ENCODE measurements at regions of chr4 and their contacts with region 1.

Region 1: DNA sequence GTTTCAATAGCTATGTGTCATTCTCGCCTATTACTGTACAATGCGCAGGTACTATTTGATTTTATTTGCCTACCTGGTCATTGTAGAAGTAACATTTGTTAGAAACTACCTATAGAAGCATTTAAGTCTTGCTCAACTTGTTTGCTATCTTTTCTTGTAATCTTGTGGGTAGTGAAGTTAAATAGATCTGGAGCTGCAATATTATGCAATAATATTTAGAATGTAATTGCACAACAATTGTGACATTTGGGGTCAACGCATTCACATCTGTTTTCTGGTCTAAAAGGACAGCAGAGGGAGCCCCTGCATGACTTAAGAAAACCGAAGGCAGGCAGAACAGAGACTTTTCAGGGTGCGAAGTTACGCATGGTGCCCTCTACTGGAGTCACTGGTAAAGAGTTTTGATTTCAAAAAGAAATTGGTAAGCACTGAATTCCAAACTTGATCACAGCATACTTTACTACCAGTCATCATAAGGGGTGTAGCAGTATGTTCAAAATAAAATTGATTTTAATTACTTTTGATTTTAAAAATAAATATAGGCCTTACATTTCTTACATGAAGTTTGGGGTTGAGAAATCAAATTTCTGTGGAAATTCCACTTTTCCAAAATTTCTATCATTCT is 503.2 kb upstream of the FAM241A start:
- DNase-seq: peak; percentile 87
- ATAC-seq: peak; percentile 97
- H3K4me3 ChIP-seq: no peak overlapping the region
- H3K27ac ChIP-seq: no peak overlapping the region
- H3K4me1 ChIP-seq: no peaks in the 10 kb centered on the region
- H3K27me3 ChIP-seq: no peaks in the 10 kb centered on the region
- CTCF ChIP-seq: peak; percentile 83
- EP300 ChIP-seq: 0 out of 4 replicates have a peak, but pooled peaks of 1 of the 2 experiments have one; percentile 22
- POLR2A ChIP-seq: no peak
- RAD21 ChIP-seq: peak; percentile 71

Region 2: DNA sequence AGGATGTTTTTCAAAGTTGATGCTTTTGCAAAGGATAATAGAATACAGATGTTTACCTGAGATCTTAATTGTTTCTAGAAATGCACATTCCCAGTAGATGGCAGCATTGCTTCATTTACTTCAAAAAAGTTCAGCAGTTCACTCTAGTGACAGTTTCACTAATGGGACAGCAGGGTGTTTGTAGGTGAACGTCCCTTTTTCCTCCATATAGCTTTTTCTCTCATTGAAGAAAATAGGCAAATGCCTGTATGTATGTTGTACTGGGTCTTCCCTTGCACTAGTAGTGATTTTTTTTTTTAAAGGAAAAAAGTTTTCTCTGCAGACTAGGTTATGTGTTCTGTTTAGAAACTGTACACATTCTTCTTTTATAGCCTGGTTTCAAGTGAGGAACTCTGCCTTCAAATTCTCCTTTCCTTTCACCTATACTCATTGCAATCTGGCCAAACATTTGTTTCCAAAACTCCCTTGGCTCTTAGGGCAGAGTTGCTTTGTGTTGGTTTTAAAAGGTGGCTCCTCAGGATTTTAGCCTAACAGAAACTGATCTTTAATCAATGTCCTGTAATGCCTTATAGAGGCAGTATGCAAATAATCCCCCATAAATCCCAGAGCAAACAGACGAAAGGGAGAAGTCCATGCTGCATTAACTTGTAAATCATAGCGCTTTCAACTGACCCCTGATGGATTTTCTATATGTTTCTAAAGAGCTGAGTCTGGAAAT is 1643.0 kb before region 1 on chr4:
- CTCF ChIA-PET with region 1: no interaction called
- POLR2A ChIA-PET with region 1: no interaction called
- in situ Hi-C with region 1: loop called (anchors 25 kb)
- intact Hi-C with region 1: loop called (anchors 5 kb)
- DNase-seq: peak; percentile 73
- ATAC-seq: peak; percentile 95
- H3K4me3 ChIP-seq: no peak overlapping the region
- H3K27ac ChIP-seq: no peak overlapping the region
- H3K4me1 ChIP-seq: peaks cover 8% of the 10 kb centered on the region; the same call in 1 of the 2 replicates
- H3K27me3 ChIP-seq: no peaks in the 10 kb centered on the region
- CTCF ChIP-seq: peak; percentile 79
- EP300 ChIP-seq: no peak
- POLR2A ChIP-seq: no peak
- RAD21 ChIP-seq: peak; percentile 72

Region 3: DNA sequence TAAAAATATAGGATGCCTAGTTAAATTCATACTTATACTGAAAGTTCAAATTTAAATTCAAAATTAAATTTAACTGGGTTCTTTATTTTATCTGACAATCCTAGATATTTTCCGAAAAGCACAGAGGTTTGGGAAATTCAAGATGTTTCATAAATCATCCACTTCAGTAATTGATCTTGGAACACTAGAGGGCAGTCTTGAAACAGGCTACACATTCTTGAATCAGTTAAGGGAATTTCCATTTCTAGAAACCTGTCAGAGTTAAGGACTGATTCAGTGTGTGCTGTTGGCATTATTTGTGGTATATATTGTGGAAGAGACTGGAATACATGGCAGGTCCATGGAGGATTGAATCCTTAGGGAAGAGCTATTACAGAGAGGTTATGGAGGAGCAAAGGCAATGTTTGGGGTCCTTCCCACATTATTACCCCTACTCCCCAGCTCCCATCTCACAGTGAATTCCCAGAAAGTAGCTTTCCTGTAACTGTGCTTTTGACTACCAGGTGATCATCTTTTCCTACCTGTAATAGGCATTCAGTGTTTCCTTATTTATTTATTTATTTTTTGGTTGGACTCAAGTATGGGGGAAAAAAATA is 1636.5 kb before region 1 on chr4:
- CTCF ChIA-PET with region 1: no interaction called
- POLR2A ChIA-PET with region 1: no interaction called
- in situ Hi-C with region 1: loop called (anchors 25 kb)
- intact Hi-C with region 1: no loop called
- DNase-seq: peak; percentile 60
- ATAC-seq: peak; percentile 50
- H3K4me3 ChIP-seq: no peak overlapping the region
- H3K27ac ChIP-seq: no peak overlapping the region
- H3K4me1 ChIP-seq: peaks cover 29% of the 10 kb centered on the region
- H3K27me3 ChIP-seq: no peaks in the 10 kb centered on the region
- CTCF ChIP-seq: peak; percentile 77
- EP300 ChIP-seq: no peak
- POLR2A ChIP-seq: no peak
- RAD21 ChIP-seq: peak; percentile 45; the same call in 1 of the 2 replicates

Region 4: DNA sequence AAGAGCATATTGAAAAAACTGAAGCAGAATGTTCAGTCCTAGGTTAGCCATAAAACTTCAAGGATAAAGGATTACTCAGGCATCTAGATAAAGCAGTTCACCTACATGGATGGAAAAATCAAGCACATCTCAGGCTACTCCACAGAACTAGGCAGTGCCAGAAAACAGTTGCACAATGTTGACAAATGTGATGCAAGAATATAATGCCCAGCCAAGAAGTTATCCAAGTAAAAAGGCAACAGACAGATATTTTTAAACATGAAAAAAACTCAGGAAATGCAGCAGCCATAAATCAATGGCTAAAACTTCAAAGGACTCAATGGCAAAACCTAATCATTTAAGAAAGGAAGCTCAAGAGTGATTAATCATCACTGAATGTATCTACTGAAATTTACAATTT is 47.1 kb after region 1 on chr4:
- CTCF ChIA-PET with region 1: no interaction called
- POLR2A ChIA-PET with region 1: no interaction called
- in situ Hi-C with region 1: no loop called
- intact Hi-C with region 1: no loop called
- DNase-seq: no peak
- ATAC-seq: peak; percentile 45; the same call in 1 of the 3 replicates
- H3K4me3 ChIP-seq: no peak overlapping the region
- H3K27ac ChIP-seq: no peak overlapping the region
- H3K4me1 ChIP-seq: no peaks in the 10 kb centered on the region
- H3K27me3 ChIP-seq: no peaks in the 10 kb centered on the region
- CTCF ChIP-seq: no peak
- EP300 ChIP-seq: no peak
- POLR2A ChIP-seq: no peak
- RAD21 ChIP-seq: no peak

Region 5: GRCh38 chr4:111798840-111799239 is 156.8 kb after region 1 on chr4:
- CTCF ChIA-PET with region 1: no interaction called
- POLR2A ChIA-PET with region 1: no interaction called
- in situ Hi-C with region 1: no loop called
- intact Hi-C with region 1: loop called (anchors 2 kb)
- DNase-seq: no peak
- ATAC-seq: peak; percentile 80
- H3K4me3 ChIP-seq: no peak overlapping the region
- H3K27ac ChIP-seq: no peak overlapping the region
- H3K4me1 ChIP-seq: no peaks in the 10 kb centered on the region
- H3K27me3 ChIP-seq: no peaks in the 10 kb centered on the region
- CTCF ChIP-seq: no peak
- EP300 ChIP-seq: no peak
- POLR2A ChIP-seq: no peak
- RAD21 ChIP-seq: no peak

Region 6: DNA sequence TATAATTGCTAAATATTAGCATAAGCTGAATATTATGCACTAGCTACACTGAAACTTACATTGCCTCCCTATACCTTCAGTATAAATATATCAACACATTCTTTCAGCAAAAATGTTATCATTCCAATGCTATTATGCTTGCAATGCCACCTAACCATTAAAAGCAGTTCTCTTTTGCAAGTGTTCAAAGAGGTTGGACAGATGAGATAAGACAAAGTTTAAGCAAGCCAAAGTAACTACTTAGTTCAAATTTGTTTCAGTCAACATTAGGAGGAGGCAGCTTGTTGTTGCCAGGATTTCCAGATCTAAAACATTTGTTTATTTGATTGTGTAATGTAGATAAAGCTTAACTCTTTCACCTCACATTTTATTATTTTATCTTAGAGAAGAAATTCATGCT is 179.3 kb after region 1 on chr4:
- CTCF ChIA-PET with region 1: no interaction called
- POLR2A ChIA-PET with region 1: no interaction called
- in situ Hi-C with region 1: no loop called
- intact Hi-C with region 1: no loop called
- DNase-seq: no peak
- ATAC-seq: no peak
- H3K4me3 ChIP-seq: no peak overlapping the region
- H3K27ac ChIP-seq: no peak overlapping the region
- H3K4me1 ChIP-seq: no peaks in the 10 kb centered on the region
- H3K27me3 ChIP-seq: no peaks in the 10 kb centered on the region; a peak in 1 of 5 replicates
- CTCF ChIP-seq: no peak
- EP300 ChIP-seq: no peak
- POLR2A ChIP-seq: no peak
- RAD21 ChIP-seq: no peak

Region 7: GRCh38 chr4:111854494-111855087 is 212.5 kb after region 1 on chr4:
- CTCF ChIA-PET with region 1: interaction called, 11 read pairs
- POLR2A ChIA-PET with region 1: no interaction called
- in situ Hi-C with region 1: loop called (anchors 5 kb)
- intact Hi-C with region 1: loop called (anchors 1 kb)
- DNase-seq: peak; percentile 10
- ATAC-seq: peak; percentile 78
- H3K4me3 ChIP-seq: no peak overlapping the region
- H3K27ac ChIP-seq: no peak overlapping the region
- H3K4me1 ChIP-seq: no peaks in the 10 kb centered on the region
- H3K27me3 ChIP-seq: no peaks in the 10 kb centered on the region; a peak in 1 of 5 replicates
- CTCF ChIP-seq: peak; percentile 66
- EP300 ChIP-seq: no peak
- POLR2A ChIP-seq: no peak
- RAD21 ChIP-seq: peak; percentile 28; the same call in 1 of the 2 replicates

Region 8: DNA sequence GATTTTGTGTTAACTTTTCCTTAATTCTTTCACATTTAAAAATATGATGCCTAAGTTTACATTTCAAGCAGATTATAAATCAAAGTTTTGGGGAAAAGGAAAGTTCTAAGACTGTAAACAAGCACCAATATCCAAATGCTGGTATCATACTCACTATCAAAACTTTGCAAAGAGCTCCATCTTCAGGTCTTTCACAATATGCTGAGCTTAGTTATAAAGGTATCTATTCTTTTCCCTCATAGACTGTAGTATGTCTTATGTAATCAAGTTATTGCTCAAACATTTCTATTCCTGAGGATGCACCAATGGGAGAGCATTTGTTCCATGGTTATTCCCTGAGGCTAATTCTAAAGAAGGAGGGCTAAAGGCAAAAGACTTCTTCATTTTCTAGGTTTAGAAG is 295.3 kb after region 1 on chr4:
- CTCF ChIA-PET with region 1: interaction called, 5 read pairs
- POLR2A ChIA-PET with region 1: no interaction called
- in situ Hi-C with region 1: loop called (anchors 5 kb)
- intact Hi-C with region 1: loop called (anchors 1 kb)
- DNase-seq: peak; percentile 51
- ATAC-seq: peak; percentile 82
- H3K4me3 ChIP-seq: no peak overlapping the region
- H3K27ac ChIP-seq: no peak overlapping the region
- H3K4me1 ChIP-seq: no peaks in the 10 kb centered on the region
- H3K27me3 ChIP-seq: no peaks in the 10 kb centered on the region
- CTCF ChIP-seq: peak; percentile 50
- EP300 ChIP-seq: no peak
- POLR2A ChIP-seq: no peak
- RAD21 ChIP-seq: no peak

Region 9: DNA sequence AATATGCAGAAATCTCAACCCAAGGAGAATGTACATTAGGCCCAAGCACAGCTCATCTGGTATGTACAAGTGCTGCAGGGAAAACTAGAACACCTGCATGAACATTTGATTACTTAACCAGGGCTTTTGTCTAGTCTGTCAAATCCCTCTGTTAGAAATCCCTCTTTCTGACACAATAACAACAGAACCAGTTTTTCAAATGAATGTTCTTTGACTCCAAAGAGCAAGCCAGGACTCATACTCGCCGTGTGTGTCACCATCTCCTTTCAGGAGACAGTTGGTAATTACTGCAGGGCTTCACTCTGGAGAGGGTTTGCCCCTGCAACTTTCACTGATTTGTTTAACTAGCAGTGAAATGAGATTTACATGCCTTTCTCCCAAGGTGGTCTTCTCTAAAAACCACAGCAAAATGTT is 360.2 kb after region 1 on chr4:
- CTCF ChIA-PET with region 1: no interaction called
- POLR2A ChIA-PET with region 1: no interaction called
- in situ Hi-C with region 1: no loop called
- intact Hi-C with region 1: no loop called
- DNase-seq: no peak
- ATAC-seq: no peak
- H3K4me3 ChIP-seq: no peak overlapping the region
- H3K27ac ChIP-seq: no peak overlapping the region
- H3K4me1 ChIP-seq: no peaks in the 10 kb centered on the region
- H3K27me3 ChIP-seq: no peaks in the 10 kb centered on the region
- CTCF ChIP-seq: no peak
- EP300 ChIP-seq: no peak
- POLR2A ChIP-seq: no peak
- RAD21 ChIP-seq: no peak

Region 10: DNA sequence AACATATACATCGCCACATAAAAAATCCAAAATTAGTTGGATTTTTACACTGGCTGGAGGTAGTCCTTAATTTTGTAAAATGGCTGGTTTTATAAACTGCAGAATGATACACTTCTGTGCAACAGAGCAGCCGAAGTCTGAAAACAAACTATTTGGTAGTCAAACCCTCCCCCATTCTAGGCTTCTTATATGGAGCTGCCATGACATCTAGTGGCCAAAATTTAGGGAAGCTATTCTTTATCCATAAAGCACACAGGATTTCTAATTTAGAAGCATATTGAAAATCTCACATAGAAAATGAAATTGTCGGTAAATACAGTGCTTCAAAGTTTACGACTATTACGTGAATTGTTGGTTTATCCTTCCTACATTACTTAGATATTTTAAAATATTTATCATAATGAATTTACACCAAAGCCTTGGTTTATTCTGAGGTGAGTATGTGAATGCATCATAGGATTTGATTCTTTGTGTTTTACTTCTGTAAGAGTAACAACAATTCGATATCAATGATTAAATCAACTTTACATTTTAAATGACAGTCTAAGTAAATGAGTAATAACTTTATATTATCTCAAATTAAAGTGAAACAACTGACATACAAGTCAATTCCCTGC is 389.8 kb after region 1 on chr4:
- CTCF ChIA-PET with region 1: interaction called, 15 read pairs
- POLR2A ChIA-PET with region 1: no interaction called
- in situ Hi-C with region 1: loop called (anchors 5 kb)
- intact Hi-C with region 1: loop called (anchors 1 kb)
- DNase-seq: peak; percentile 25
- ATAC-seq: peak; percentile 72
- H3K4me3 ChIP-seq: no peak overlapping the region
- H3K27ac ChIP-seq: no peak overlapping the region
- H3K4me1 ChIP-seq: no peaks in the 10 kb centered on the region
- H3K27me3 ChIP-seq: no peaks in the 10 kb centered on the region
- CTCF ChIP-seq: peak; percentile 73
- EP300 ChIP-seq: no peak
- POLR2A ChIP-seq: no peak
- RAD21 ChIP-seq: peak; percentile 54